Caco-2 (cell line): ENCODE measurements at regions of chr2 and their contacts with region 1.

Region 1: GRCh38 chr2:177392373-177393202 is at the start of gene AGPS:
- DNase-seq: peak; percentile 87 to 94
- H3K4me3 ChIP-seq: peak within 1 kb of the TSS; percentile 100
- H3K4me3 Mint-ChIP-seq: peak within 1 kb of the TSS; percentile 84
- H3K27ac Mint-ChIP-seq: peak within 1 kb of the TSS; percentile 82
- H3K4me1 ChIP-seq: peaks cover 51% of the 10 kb centered on the region
- H3K4me1 Mint-ChIP-seq: peaks cover 24% of the 10 kb centered on the region
- H3K27me3 ChIP-seq: no peaks in the 10 kb centered on the region
- H3K27me3 Mint-ChIP-seq: no peaks in the 10 kb centered on the region
- CTCF ChIP-seq: no peak
- total RNA-seq, gene AGPS: 102 and 105 TPM in 2 replicates

Region 2: DNA sequence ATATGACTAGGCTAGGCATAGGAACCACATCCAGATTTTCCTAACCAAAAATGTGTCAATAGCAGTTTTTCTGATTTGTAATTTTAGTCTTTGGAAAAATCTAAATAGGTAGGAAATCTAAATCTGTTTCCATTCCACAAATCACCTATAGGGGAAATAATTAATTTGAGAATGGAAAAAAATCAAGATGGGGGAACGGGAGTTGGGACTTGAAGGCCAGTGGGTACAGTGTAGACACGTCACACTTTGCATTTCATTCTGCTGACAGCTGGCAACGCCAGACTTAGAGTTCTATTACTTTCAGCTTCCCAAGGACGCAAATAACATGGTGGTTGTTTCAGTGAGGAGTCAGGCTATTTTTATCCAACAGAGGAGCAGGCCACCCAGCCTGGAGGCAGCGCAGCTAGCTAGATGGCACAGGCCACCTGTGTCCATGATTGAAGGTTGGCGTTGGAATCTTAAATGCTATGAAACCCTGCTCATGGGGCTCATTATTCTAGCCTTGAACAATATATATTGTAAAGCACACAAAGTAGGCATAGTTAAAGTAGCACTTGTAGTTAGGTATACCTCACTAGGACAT is 156.6 kb before region 1 on chr2:
- CTCF ChIA-PET with region 1: no interaction called
- POLR2A ChIA-PET with region 1: no interaction called
- intact Hi-C with region 1: no loop called
- DNase-seq: no peak
- H3K4me3 ChIP-seq: no peak overlapping the region
- H3K4me3 Mint-ChIP-seq: no peak overlapping the region
- H3K27ac Mint-ChIP-seq: no peak overlapping the region
- H3K4me1 ChIP-seq: peaks cover 27% of the 10 kb centered on the region
- H3K4me1 Mint-ChIP-seq: peaks cover 2% of the 10 kb centered on the region
- H3K27me3 ChIP-seq: no peaks in the 10 kb centered on the region
- H3K27me3 Mint-ChIP-seq: no peaks in the 10 kb centered on the region
- CTCF ChIP-seq: no peak

Region 3: GRCh38 chr2:177353187-177353478 is 39.5 kb before region 1 on chr2:
- CTCF ChIA-PET with region 1: interaction called, 5 read pairs
- POLR2A ChIA-PET with region 1: no interaction called
- intact Hi-C with region 1: loop called (anchors 5 kb)
- DNase-seq: no peak
- H3K4me3 ChIP-seq: no peak overlapping the region
- H3K4me3 Mint-ChIP-seq: no peak overlapping the region
- H3K27ac Mint-ChIP-seq: no peak overlapping the region
- H3K4me1 ChIP-seq: 0 out of 2 replicates have a peak, but pooled peaks cover 9% of the 10 kb centered on the region
- H3K4me1 Mint-ChIP-seq: peaks cover 5% of the 10 kb centered on the region
- H3K27me3 ChIP-seq: no peaks in the 10 kb centered on the region
- H3K27me3 Mint-ChIP-seq: no peaks in the 10 kb centered on the region
- CTCF ChIP-seq: no peak

Region 4: DNA sequence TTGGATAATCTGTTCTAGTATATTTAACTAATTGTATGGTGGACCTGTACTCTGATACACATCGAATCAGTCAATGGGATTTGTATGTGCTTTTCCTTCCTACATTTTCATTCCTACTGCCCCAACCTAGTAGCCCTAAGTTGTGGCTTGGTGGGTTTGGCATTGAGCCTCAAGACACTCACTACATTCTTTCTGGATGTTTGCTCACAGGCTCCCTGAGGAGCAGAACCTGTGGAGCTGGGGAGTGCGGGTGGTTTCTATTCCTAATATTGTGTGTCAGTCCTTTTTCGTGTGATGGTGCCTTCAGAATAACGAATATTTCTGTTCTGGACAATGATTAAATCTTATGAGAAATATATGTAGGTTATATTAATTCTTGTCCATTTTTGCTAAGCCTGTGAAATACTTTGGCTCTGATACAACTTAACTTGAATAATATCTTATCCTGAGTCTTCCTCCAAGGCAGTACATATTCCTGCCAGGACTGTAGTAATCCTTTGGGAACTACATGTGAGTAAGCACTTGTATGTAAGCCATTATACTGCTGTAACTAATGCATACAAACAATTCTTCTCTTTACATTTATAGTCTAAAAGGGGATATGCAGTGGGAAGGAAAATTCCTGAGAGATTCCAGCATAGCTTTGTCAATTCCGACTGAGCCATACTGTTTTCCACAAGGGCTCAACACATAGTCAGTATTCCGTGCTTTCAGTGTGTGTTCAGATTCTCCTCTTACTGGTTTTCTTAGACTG is 150.6 kb after region 1 on chr2:
- CTCF ChIA-PET with region 1: no interaction called
- POLR2A ChIA-PET with region 1: no interaction called
- intact Hi-C with region 1: no loop called
- DNase-seq: no peak
- H3K4me3 ChIP-seq: no peak overlapping the region
- H3K4me3 Mint-ChIP-seq: no peak overlapping the region
- H3K27ac Mint-ChIP-seq: no peak overlapping the region
- H3K4me1 ChIP-seq: no peaks in the 10 kb centered on the region
- H3K4me1 Mint-ChIP-seq: no peaks in the 10 kb centered on the region
- H3K27me3 ChIP-seq: no peaks in the 10 kb centered on the region
- H3K27me3 Mint-ChIP-seq: no peaks in the 10 kb centered on the region
- CTCF ChIP-seq: no peak

Region 5: DNA sequence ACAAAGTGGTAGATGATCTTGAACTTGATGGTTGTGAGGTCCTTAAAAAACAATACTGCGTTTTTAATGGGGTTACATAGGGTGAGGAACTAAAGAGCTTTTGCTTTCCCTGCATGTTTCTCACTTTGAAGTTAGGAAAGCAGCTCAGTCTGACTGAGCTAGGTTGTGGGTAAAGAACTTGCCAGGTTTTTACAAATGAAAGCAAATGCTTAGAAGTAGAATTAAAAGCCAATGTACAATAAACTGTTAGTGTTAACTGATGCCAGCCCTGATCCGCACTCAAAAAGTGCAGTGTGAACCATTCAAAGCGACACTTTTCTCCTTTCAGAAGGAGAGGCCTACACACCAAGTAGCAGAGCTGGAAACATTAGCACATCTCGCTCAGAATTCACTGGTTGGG is 270.3 kb after region 1 on chr2:
- CTCF ChIA-PET with region 1: no interaction called
- POLR2A ChIA-PET with region 1: no interaction called
- intact Hi-C with region 1: no loop called
- DNase-seq: no peak
- H3K4me3 ChIP-seq: no peak overlapping the region
- H3K4me3 Mint-ChIP-seq: no peak overlapping the region
- H3K27ac Mint-ChIP-seq: no peak overlapping the region
- H3K4me1 ChIP-seq: no peaks in the 10 kb centered on the region
- H3K4me1 Mint-ChIP-seq: no peaks in the 10 kb centered on the region
- H3K27me3 ChIP-seq: no peaks in the 10 kb centered on the region
- H3K27me3 Mint-ChIP-seq: peaks cover 11% of the 10 kb centered on the region
- CTCF ChIP-seq: no peak